ENCODE measurements at regions of chr9 and their contacts with region 1.

Region 1: GRCh38 chr9:76216161-76216649 is 178.0 kb downstream of the RFK start:
- DNase-seq: peak; percentile 98
- ATAC-seq: peak; percentile 87
- H3K4me3 ChIP-seq: no peak overlapping the region
- H3K27ac ChIP-seq: peak overlapping the region; percentile 98
- H3K4me1 ChIP-seq: peaks cover 24% of the 10 kb centered on the region
- H3K27me3 ChIP-seq: no peaks in the 10 kb centered on the region
- CTCF ChIP-seq: no peak
- POLR2A ChIP-seq: no peak
- RAD21 ChIP-seq: no peak

Region 2: DNA sequence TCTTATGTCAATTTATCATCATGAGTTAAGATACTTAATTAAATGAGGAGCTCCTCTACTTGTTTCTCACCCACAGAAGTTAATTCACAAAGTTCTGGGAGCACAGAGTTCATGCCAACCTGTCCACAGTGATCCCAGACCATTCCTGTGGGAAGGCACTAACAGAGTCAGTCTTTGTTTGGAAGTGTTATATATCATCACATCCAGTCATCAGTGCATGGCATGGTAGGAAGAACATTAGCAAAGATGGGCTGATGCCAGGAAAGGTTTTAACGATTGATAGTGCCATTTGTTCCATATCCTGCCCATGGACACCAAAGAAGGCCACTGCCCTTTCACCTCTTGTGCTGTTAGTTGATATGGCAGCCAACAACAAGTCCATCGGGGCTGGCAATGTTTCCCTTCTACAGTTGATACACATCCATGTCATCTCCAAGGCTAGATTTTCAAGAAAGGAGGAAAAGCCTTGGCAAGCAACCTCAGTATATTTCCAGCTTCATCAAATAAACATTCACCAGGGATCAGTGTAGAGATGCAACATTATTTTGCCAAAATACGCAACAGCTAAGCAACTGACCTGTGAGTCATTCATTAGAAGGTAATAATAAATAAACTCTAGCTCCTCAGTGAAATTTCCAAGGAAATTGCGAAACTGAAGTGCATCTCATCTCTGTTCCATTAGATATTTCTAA is 1549.4 kb before region 1 on chr9:
- CTCF ChIA-PET with region 1: no interaction called
- POLR2A ChIA-PET with region 1: interaction called, 18 read pairs
- dilution Hi-C with region 1: no loop called
- in situ Hi-C with region 1: no loop called
- intact Hi-C with region 1: no loop called
- DNase-seq: peak; percentile 40
- ATAC-seq: peak; percentile 53
- H3K4me3 ChIP-seq: no peak overlapping the region
- H3K27ac ChIP-seq: peak overlapping the region; percentile 66; the same call in 1 of the 2 replicates
- H3K4me1 ChIP-seq: no peaks in the 10 kb centered on the region
- H3K27me3 ChIP-seq: no peaks in the 10 kb centered on the region
- CTCF ChIP-seq: no peak
- POLR2A ChIP-seq: no peak
- RAD21 ChIP-seq: no peak

Region 3: DNA sequence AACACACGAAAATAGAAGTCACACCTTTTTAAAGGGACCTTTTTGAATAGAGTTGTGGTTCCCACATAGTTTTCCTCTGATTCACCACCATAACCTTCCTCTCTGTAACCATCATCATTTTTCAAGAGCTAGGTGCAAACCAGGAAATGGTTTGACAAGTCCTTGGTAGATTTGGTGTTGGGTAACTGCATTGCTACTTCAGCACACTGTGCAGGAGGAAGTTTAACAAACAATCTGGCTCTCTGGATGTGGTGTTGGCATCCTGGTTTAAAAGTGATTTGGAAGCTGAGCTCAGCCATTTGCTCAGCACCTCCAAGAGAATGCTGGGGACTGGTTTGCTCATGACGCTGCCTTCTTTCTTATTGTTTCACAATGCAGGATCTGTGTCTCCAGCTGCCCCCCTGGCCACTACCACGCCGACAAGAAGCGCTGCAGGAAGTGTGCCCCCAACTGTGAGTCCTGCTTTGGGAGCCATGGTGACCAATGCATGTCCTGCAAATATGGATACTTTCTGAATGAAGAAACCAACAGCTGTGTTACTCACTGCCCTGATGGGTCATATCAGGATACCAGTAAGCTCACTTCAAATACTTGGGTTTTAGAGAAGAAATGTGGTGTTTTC is 35.1 kb before region 1 on chr9:
- CTCF ChIA-PET with region 1: interaction called, 3 read pairs
- POLR2A ChIA-PET with region 1: no interaction called
- dilution Hi-C with region 1: no loop called
- in situ Hi-C with region 1: no loop called
- intact Hi-C with region 1: loop called (anchors 2 kb)
- DNase-seq: peak; percentile 74
- ATAC-seq: peak; percentile 76
- H3K4me3 ChIP-seq: no peak overlapping the region
- H3K27ac ChIP-seq: peak overlapping the region; percentile 73
- H3K4me1 ChIP-seq: peaks cover 15% of the 10 kb centered on the region
- H3K27me3 ChIP-seq: no peaks in the 10 kb centered on the region
- CTCF ChIP-seq: no peak
- POLR2A ChIP-seq: no peak
- RAD21 ChIP-seq: no peak

Region 4: GRCh38 chr9:76441551-76442322 is 225.5 kb after region 1 on chr9:
- CTCF ChIA-PET with region 1: no interaction called
- POLR2A ChIA-PET with region 1: no interaction called
- dilution Hi-C with region 1: no loop called
- in situ Hi-C with region 1: no loop called
- intact Hi-C with region 1: no loop called
- DNase-seq: peak; percentile 92
- ATAC-seq: peak; percentile 81; the same call in 1 of the 2 replicates
- H3K4me3 ChIP-seq: no peak overlapping the region
- H3K27ac ChIP-seq: no peak overlapping the region
- H3K4me1 ChIP-seq: peaks cover 2% of the 10 kb centered on the region; the same call in 1 of the 2 replicates
- H3K27me3 ChIP-seq: no peaks in the 10 kb centered on the region
- CTCF ChIP-seq: no peak
- POLR2A ChIP-seq: no peak
- RAD21 ChIP-seq: no peak